ENCODE measurements at regions of chr11 and their contacts with region 1.

Region 1: DNA sequence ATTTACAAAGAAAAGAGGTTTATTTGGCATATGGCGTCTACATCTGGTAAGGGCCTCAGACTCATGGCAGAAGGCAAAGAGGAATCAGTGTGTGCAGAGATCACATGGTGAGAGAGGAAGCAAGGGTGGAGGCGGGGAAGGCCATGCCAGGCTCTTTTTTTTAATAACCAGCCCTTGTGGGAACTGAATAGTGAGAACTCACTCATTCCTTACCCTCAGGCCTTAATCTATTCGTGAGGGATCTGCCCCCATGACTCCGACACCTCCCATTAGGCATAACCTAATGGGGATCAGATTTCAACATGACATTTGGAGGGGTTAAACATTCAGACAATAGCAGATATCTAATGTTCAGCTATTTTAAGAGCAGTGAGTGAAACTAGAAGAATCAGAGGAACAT is 55.7 kb downstream of the ATM start:
- DNase-seq: peak in 2 of 14 experiments; percentile 10 to 21
- ATAC-seq: no peak
- H3K4me3 ChIP-seq: no peak overlapping the region
- H3K4me3 Mint-ChIP-seq: peak overlapping the region; percentile 3
- H3K27ac ChIP-seq: no peak overlapping the region
- H3K27ac Mint-ChIP-seq: peak overlapping the region; percentile 84
- H3K4me1 ChIP-seq: peaks cover 15% of the 10 kb centered on the region
- H3K4me1 Mint-ChIP-seq: peaks cover 80% of the 10 kb centered on the region
- H3K27me3 ChIP-seq: no peaks in the 10 kb centered on the region
- H3K27me3 Mint-ChIP-seq: no peaks in the 10 kb centered on the region
- CTCF ChIP-seq: no peak

Region 2: GRCh38 chr11:108289699-108290098 is 11.2 kb after region 1 on chr11:
- CTCF ChIA-PET with region 1: interaction called, 3 read pairs
- POLR2A ChIA-PET with region 1: interaction called, 10 read pairs
- intact Hi-C with region 1: no loop called
- DNase-seq: no peak
- ATAC-seq: no peak
- H3K4me3 ChIP-seq: no peak overlapping the region
- H3K4me3 Mint-ChIP-seq: no peak overlapping the region
- H3K27ac ChIP-seq: no peak overlapping the region
- H3K27ac Mint-ChIP-seq: peak overlapping the region; percentile 42
- H3K4me1 ChIP-seq: no peaks in the 10 kb centered on the region
- H3K4me1 Mint-ChIP-seq: peaks cover 31% of the 10 kb centered on the region
- H3K27me3 ChIP-seq: no peaks in the 10 kb centered on the region
- H3K27me3 Mint-ChIP-seq: no peaks in the 10 kb centered on the region
- CTCF ChIP-seq: no peak

Region 3: GRCh38 chr11:108302121-108302785 is 23.7 kb after region 1 on chr11:
- CTCF ChIA-PET with region 1: no interaction called
- POLR2A ChIA-PET with region 1: no interaction called
- intact Hi-C with region 1: no loop called
- DNase-seq: no peak
- ATAC-seq: no peak
- H3K4me3 ChIP-seq: no peak overlapping the region
- H3K4me3 Mint-ChIP-seq: no peak overlapping the region
- H3K27ac ChIP-seq: no peak overlapping the region
- H3K27ac Mint-ChIP-seq: peak overlapping the region; percentile 76
- H3K4me1 ChIP-seq: no peaks in the 10 kb centered on the region
- H3K4me1 Mint-ChIP-seq: peaks cover 37% of the 10 kb centered on the region
- H3K27me3 ChIP-seq: no peaks in the 10 kb centered on the region
- H3K27me3 Mint-ChIP-seq: no peaks in the 10 kb centered on the region
- CTCF ChIP-seq: no peak

Region 4: DNA sequence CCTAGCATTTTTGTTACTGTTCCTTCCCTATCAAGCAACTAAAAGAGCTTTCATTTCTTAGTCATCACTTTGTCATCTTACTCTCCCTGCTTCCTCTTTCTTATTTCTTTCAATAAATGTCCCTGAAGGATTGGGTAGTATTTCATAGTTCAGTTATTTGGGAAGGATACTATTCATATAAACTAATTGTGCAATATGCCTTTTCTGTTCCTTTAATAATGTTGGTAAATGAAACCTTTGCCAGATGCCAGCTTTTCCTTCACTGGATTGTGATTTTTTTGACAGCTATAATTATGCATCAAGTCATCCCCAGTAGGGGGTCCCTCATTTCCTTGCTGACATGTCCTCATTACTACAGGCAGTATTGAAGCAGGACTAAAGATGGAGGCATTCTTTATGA is 46.0 kb after region 1 on chr11:
- CTCF ChIA-PET with region 1: no interaction called
- POLR2A ChIA-PET with region 1: no interaction called
- intact Hi-C with region 1: loop called in 1 of 2 experiments (anchors 5 kb)
- DNase-seq: no peak
- ATAC-seq: no peak
- H3K4me3 ChIP-seq: no peak overlapping the region
- H3K4me3 Mint-ChIP-seq: no peak overlapping the region
- H3K27ac ChIP-seq: no peak overlapping the region
- H3K27ac Mint-ChIP-seq: peak overlapping the region; percentile 24
- H3K4me1 ChIP-seq: no peaks in the 10 kb centered on the region
- H3K4me1 Mint-ChIP-seq: no peaks in the 10 kb centered on the region
- H3K27me3 ChIP-seq: no peaks in the 10 kb centered on the region
- H3K27me3 Mint-ChIP-seq: no peaks in the 10 kb centered on the region
- CTCF ChIP-seq: no peak